Vagina (tissue), 2 donors: ENCODE measurements at regions of chr16 and their contacts with region 1.

Region 1: GRCh38 chr16:2905431-2906387 is 6.0 kb upstream of the FLYWCH1 start:
- DNase-seq: peak in 1 of 2 donors; percentile 100
- H3K4me3 ChIP-seq: peak overlapping the region; percentile 71 to 86
- H3K27ac ChIP-seq: peak overlapping the region; percentile 92
- H3K4me1 ChIP-seq: peaks cover 17% of the 10 kb centered on the region
- H3K27me3 ChIP-seq: no peaks in the 10 kb centered on the region
- CTCF ChIP-seq: no peak
- POLR2A ChIP-seq: no peak

Region 2: DNA sequence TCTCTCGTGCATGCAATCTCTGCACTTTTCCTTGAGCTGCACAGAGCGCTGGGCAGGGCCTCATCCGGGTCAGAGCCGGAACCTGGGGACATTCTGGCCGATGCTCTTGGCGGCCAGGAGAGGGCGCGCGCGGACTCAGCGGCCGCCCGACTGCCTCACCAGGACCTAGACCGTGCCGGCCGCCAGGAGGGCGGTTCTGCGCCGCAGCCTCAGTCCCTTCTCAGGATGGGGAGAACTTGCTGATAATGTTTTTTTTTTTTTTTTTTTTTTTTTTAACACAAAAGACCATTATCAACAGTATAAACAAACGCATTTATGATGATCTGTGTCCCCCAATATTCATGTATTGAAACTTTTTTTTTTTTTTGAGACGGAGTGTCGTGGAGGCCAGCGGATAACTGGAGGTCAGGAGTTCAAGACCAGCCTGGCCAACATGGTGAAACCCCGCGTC is 30.8 kb before region 1 on chr16:
- intact Hi-C with region 1: loop called (anchors 5 kb)
- DNase-seq: no peak
- H3K4me3 ChIP-seq: no peak overlapping the region
- H3K27ac ChIP-seq: no peak overlapping the region
- H3K4me1 ChIP-seq: no peaks in the 10 kb centered on the region
- H3K27me3 ChIP-seq: no peaks in the 10 kb centered on the region
- CTCF ChIP-seq: peak; percentile 82 to 98 (median 85)
- POLR2A ChIP-seq: no peak

Region 3: GRCh38 chr16:2883027-2883851 is 22.5 kb before region 1 on chr16 and contains the start of gene FLYWCH2:
- intact Hi-C with region 1: loop called (anchors 2 kb)
- DNase-seq: peak in 1 of 2 donors; percentile 96
- H3K4me3 ChIP-seq: peak within 1 kb of the TSS; percentile 81 to 96
- H3K27ac ChIP-seq: peak within 1 kb of the TSS; percentile 94
- H3K4me1 ChIP-seq: peaks cover 16% of the 10 kb centered on the region
- H3K27me3 ChIP-seq: no peaks in the 10 kb centered on the region
- CTCF ChIP-seq: peak in 1 of 3 experiments; percentile 16
- POLR2A ChIP-seq: no peak
- total RNA-seq, gene FLYWCH2: 65.1 TPM

Region 4: GRCh38 chr16:3158471-3159314 is 253.0 kb after region 1 on chr16:
- intact Hi-C with region 1: no loop called
- DNase-seq: peak in 1 of 2 donors; percentile 97
- H3K4me3 ChIP-seq: peak overlapping the region; percentile 60 to 77
- H3K27ac ChIP-seq: peak overlapping the region; percentile 87
- H3K4me1 ChIP-seq: peaks cover 17% of the 10 kb centered on the region
- H3K27me3 ChIP-seq: no peaks in the 10 kb centered on the region
- CTCF ChIP-seq: no peak
- POLR2A ChIP-seq: peak in 1 of 2 donors; percentile 65